ENCODE measurements at regions of chr16 and their contacts with region 1.

Region 1: GRCh38 chr16:68826652-68827051 is 16.7 kb upstream of the TANGO6 start:
- DNase-seq: no peak
- ATAC-seq: no peak
- H3K4me3 Mint-ChIP-seq: no peak overlapping the region
- H3K27ac Mint-ChIP-seq: no peak overlapping the region
- H3K4me1 Mint-ChIP-seq: no peaks in the 10 kb centered on the region
- H3K27me3 Mint-ChIP-seq: no peaks in the 10 kb centered on the region
- CTCF ChIP-seq: no peak

Region 2: GRCh38 chr16:68776821-68777351 is 49.8 kb before region 1 on chr16:
- CTCF ChIA-PET with region 1: no interaction called
- POLR2A ChIA-PET with region 1: no interaction called
- intact Hi-C with region 1: no loop called
- DNase-seq: peak; percentile 70
- ATAC-seq: peak; percentile 85
- H3K4me3 Mint-ChIP-seq: no peak overlapping the region
- H3K27ac Mint-ChIP-seq: no peak overlapping the region
- H3K4me1 Mint-ChIP-seq: peaks cover 7% of the 10 kb centered on the region
- H3K27me3 Mint-ChIP-seq: peaks cover 4% of the 10 kb centered on the region
- CTCF ChIP-seq: no peak

Region 3: DNA sequence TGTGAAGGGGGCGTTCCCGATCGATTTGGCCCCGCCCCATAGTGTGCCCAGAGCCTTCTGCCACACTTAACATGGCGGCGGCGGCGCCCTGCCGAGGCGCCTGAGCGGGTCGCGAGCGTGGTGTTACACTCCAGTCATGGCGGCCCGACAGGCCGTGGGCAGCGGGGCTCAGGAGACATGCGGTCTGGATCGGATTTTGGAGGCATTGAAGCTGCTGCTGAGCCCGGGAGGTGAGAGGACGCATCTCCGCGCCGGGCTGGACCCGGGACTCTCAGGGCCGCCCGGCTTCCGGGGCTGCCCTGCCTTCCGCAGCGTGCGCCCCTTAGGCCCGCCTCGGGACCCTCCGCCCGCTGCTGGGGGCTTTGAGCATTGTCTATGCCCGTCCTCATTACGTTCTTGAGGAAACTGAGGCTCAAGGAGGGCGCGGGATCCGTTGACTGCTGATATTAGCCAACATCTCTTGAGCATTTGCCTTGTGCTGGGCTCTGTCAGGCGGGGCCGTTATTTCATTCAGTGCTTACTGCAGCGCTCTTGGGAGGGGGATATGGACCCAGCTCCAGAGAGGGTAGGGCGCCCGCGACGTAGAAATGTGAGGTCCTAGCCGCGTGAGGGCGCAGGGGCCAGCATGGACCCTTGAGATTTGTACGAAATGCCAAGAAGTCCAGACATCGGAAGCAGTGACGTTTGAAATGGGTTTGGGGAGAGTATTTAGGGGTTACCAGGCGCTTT is 17.0 kb after region 1 on chr16 and contains the start of gene TANGO6:
- CTCF ChIA-PET with region 1: interaction called, 6 read pairs
- POLR2A ChIA-PET with region 1: interaction called, 16 read pairs
- intact Hi-C with region 1: no loop called
- DNase-seq: peak; percentile 95
- ATAC-seq: peak; percentile 93
- H3K4me3 Mint-ChIP-seq: peak within 1 kb of the TSS; percentile 92
- H3K27ac Mint-ChIP-seq: peak within 1 kb of the TSS; percentile 93
- H3K4me1 Mint-ChIP-seq: peaks cover 21% of the 10 kb centered on the region
- H3K27me3 Mint-ChIP-seq: no peaks in the 10 kb centered on the region
- CTCF ChIP-seq: peak; percentile 18
- total RNA-seq, gene TANGO6: 23.0 to 27.0 TPM